CD4-positive, alpha-beta T cell (primary cell): ENCODE measurements at regions of chr2 and their contacts with region 1.

Region 1: DNA sequence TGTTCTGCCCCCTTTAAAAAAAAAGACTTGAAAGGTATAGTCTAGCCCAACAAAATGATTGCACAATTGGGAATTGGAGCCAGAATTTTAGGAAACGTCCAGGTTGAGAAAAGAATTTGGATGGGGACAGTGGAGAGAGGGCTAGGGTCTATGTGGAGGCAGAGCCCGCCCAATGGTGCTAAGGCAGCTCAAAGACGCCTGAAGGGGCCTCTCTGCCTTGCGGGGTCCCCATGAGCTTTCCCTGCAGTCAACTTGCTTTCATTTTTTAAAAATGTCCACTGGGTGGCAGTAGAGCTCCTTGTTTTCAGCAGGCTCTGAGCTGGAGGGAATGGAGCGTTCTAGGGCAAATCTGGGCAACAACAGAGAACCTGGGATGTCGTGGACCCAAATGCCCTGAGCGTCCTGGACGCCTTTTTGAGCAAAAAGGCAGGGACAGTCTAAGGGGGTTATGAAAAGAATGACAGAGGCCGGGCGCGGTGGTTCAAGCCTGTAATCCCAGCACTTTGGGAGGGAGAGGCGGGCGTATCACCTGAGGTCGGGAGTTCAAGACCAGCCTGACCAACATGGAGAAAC is 40.2 kb upstream of the ITM2C start:
- DNase-seq: peak in 12 of 14 experiments; percentile 13 to 88 (median 38)
- ATAC-seq: peak; percentile 85
- H3K4me3 ChIP-seq: no peak overlapping the region
- H3K4me3 Mint-ChIP-seq: peak overlapping the region; percentile 49
- H3K27ac ChIP-seq: no peak overlapping the region
- H3K27ac Mint-ChIP-seq: peak overlapping the region; percentile 18
- H3K4me1 ChIP-seq: peaks cover 24% of the 10 kb centered on the region
- H3K4me1 Mint-ChIP-seq: peaks cover 10% of the 10 kb centered on the region
- H3K27me3 ChIP-seq: peaks cover 27 to 28% of the 10 kb centered on the region in 2 experiments
- H3K27me3 Mint-ChIP-seq: peaks cover 35% of the 10 kb centered on the region
- CTCF ChIP-seq: peak; percentile 76

Region 2: GRCh38 chr2:229243890-229244560 is 1580.5 kb before region 1 on chr2:
- CTCF ChIA-PET with region 1: no interaction called
- POLR2A ChIA-PET with region 1: no interaction called
- intact Hi-C with region 1: no loop called
- DNase-seq: no peak
- ATAC-seq: no peak
- H3K4me3 ChIP-seq: no peak overlapping the region
- H3K4me3 Mint-ChIP-seq: no peak overlapping the region
- H3K27ac ChIP-seq: no peak overlapping the region
- H3K27ac Mint-ChIP-seq: no peak overlapping the region
- H3K4me1 ChIP-seq: no peaks in the 10 kb centered on the region
- H3K4me1 Mint-ChIP-seq: no peaks in the 10 kb centered on the region
- H3K27me3 ChIP-seq: no peaks in the 10 kb centered on the region
- H3K27me3 Mint-ChIP-seq: no peaks in the 10 kb centered on the region
- CTCF ChIP-seq: no peak

Region 3: DNA sequence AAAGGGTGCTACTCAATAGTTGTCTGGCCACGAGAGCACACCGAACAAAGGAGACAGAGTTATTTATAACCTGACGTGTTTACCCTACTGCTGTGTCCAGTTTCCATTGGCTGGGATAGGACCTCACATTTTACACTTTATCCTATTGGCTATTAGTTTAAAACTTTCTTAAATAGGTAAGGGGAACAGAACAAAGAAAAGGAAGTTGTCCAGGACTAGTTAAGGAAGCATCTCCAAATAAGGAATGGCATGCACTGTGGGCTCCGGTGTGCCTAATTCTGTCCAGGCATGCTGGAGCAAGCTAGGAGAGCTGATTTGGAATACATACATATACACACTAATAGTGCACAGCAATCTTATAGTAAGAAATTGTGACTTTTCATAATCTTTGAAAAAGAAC is 39.7 kb before region 1 on chr2:
- CTCF ChIA-PET with region 1: no interaction called
- POLR2A ChIA-PET with region 1: no interaction called
- intact Hi-C with region 1: no loop called
- DNase-seq: no peak
- ATAC-seq: no peak
- H3K4me3 ChIP-seq: no peak overlapping the region
- H3K4me3 Mint-ChIP-seq: no peak overlapping the region
- H3K27ac ChIP-seq: no peak overlapping the region
- H3K27ac Mint-ChIP-seq: peak overlapping the region; percentile 61
- H3K4me1 ChIP-seq: peaks cover 32% of the 10 kb centered on the region
- H3K4me1 Mint-ChIP-seq: peaks cover 61% of the 10 kb centered on the region
- H3K27me3 ChIP-seq: no peaks in the 10 kb centered on the region
- H3K27me3 Mint-ChIP-seq: no peaks in the 10 kb centered on the region
- CTCF ChIP-seq: no peak

Region 4: GRCh38 chr2:230913406-230914143 is 89.1 kb after region 1 on chr2:
- CTCF ChIA-PET with region 1: no interaction called
- POLR2A ChIA-PET with region 1: no interaction called
- intact Hi-C with region 1: loop called in 1 of 2 experiments (anchors 5 kb)
- DNase-seq: peak in 6 of 14 experiments; percentile 23 to 62 (median 40)
- ATAC-seq: peak; percentile 60
- H3K4me3 ChIP-seq: no peak overlapping the region
- H3K4me3 Mint-ChIP-seq: no peak overlapping the region
- H3K27ac ChIP-seq: no peak overlapping the region
- H3K27ac Mint-ChIP-seq: no peak overlapping the region
- H3K4me1 ChIP-seq: peaks cover 7% of the 10 kb centered on the region
- H3K4me1 Mint-ChIP-seq: peaks cover 23% of the 10 kb centered on the region
- H3K27me3 ChIP-seq: no peaks in the 10 kb centered on the region
- H3K27me3 Mint-ChIP-seq: no peaks in the 10 kb centered on the region
- CTCF ChIP-seq: peak; percentile 48

Region 5: GRCh38 chr2:230987137-230988020 is 162.9 kb after region 1 on chr2:
- CTCF ChIA-PET with region 1: interaction called, 28 read pairs
- POLR2A ChIA-PET with region 1: interaction called, 6 read pairs
- intact Hi-C with region 1: loop called (anchors 1 kb)
- DNase-seq: peak; percentile 36 to 86 (median 73)
- ATAC-seq: peak; percentile 74
- H3K4me3 ChIP-seq: peak overlapping the region; percentile 59
- H3K4me3 Mint-ChIP-seq: peak overlapping the region; percentile 38
- H3K27ac ChIP-seq: no peak overlapping the region
- H3K27ac Mint-ChIP-seq: no peak overlapping the region
- H3K4me1 ChIP-seq: peaks cover 31% of the 10 kb centered on the region
- H3K4me1 Mint-ChIP-seq: peaks cover 22% of the 10 kb centered on the region
- H3K27me3 ChIP-seq: peaks cover 6 to 10% of the 10 kb centered on the region in 2 experiments
- H3K27me3 Mint-ChIP-seq: peaks cover 24% of the 10 kb centered on the region
- CTCF ChIP-seq: peak; percentile 92

Region 6: GRCh38 chr2:231452799-231453508 is 628.5 kb after region 1 on chr2:
- CTCF ChIA-PET with region 1: interaction called, 4 read pairs
- POLR2A ChIA-PET with region 1: no interaction called
- intact Hi-C with region 1: loop called in 1 of 2 experiments (anchors 5 kb)
- DNase-seq: peak in 1 of 14 experiments; percentile 24
- ATAC-seq: no peak
- H3K4me3 ChIP-seq: no peak overlapping the region
- H3K4me3 Mint-ChIP-seq: peak overlapping the region; percentile 20
- H3K27ac ChIP-seq: no peak overlapping the region
- H3K27ac Mint-ChIP-seq: peak overlapping the region; percentile 82
- H3K4me1 ChIP-seq: peaks cover 8% of the 10 kb centered on the region
- H3K4me1 Mint-ChIP-seq: peaks cover 22% of the 10 kb centered on the region
- H3K27me3 ChIP-seq: no peaks in the 10 kb centered on the region
- H3K27me3 Mint-ChIP-seq: no peaks in the 10 kb centered on the region
- CTCF ChIP-seq: no peak